CD4-positive, alpha-beta memory T cell (primary cell): ENCODE measurements at regions of chr6 and their contacts with region 1.

Region 1: DNA sequence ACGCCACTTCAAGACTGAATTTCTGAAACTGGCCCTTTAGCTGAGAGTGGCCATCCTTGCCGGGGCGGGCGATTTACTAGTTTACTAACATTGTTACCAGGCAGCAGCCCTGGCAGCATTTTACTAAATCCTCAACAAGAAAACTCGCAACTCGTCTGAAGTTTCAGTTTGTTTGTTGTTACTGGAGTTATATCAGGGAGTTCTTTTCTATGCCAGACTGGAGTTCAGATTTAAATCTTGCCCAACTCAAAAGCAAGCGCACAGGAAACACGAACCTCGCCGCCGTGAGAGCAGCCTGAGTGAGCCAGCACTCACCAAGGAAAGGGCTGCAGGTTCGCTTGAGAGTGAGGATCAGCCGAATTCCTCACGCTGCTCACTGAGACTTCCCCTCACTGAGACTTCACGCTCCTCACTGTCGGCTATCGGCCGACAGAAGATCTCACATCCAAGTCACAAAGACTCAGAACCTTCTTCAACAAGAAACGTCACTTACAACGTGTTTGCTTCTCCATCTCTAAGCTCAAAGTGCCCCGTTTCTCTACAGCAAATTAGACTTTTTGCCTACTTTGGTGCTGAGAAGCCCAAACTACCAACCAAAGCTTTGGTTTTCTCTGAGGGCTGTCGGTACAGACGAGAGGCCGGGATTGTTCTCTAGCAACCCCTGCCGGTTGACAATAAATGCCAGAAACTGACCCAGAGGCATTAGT is 78.9 kb downstream of the OLIG3 start:
- DNase-seq: peak; percentile 62 to 76 (median 73)
- H3K4me3 ChIP-seq: peak overlapping the region; percentile 48 to 53
- H3K4me3 Mint-ChIP-seq: peak overlapping the region; percentile 83 to 93 (median 88)
- H3K27ac ChIP-seq: peak overlapping the region; percentile 60
- H3K27ac Mint-ChIP-seq: peak overlapping the region; percentile 79 to 97 (median 92)
- H3K4me1 ChIP-seq: peaks cover 10% of the 10 kb centered on the region
- H3K4me1 Mint-ChIP-seq: peaks cover 6 to 20% (median 14%) of the 10 kb centered on the region in 4 donors
- H3K27me3 ChIP-seq: no peaks in the 10 kb centered on the region
- H3K27me3 Mint-ChIP-seq: no peaks in the 10 kb centered on the region

Region 2: GRCh38 chr6:136866872-136867416 is 548.3 kb before region 1 on chr6:
- CTCF ChIA-PET with region 1: no interaction called
- POLR2A ChIA-PET with region 1: no interaction called
- intact Hi-C with region 1: no loop called
- DNase-seq: no peak
- H3K4me3 ChIP-seq: no peak overlapping the region
- H3K4me3 Mint-ChIP-seq: no peak overlapping the region
- H3K27ac ChIP-seq: no peak overlapping the region
- H3K27ac Mint-ChIP-seq: peak overlapping the region in 2 of 7 donors; percentile 48 to 57
- H3K4me1 ChIP-seq: no peaks in the 10 kb centered on the region
- H3K4me1 Mint-ChIP-seq: peaks cover 0 to 2% (median 0%) of the 10 kb centered on the region in 4 donors
- H3K27me3 ChIP-seq: no peaks in the 10 kb centered on the region
- H3K27me3 Mint-ChIP-seq: no peaks in the 10 kb centered on the region

Region 3: DNA sequence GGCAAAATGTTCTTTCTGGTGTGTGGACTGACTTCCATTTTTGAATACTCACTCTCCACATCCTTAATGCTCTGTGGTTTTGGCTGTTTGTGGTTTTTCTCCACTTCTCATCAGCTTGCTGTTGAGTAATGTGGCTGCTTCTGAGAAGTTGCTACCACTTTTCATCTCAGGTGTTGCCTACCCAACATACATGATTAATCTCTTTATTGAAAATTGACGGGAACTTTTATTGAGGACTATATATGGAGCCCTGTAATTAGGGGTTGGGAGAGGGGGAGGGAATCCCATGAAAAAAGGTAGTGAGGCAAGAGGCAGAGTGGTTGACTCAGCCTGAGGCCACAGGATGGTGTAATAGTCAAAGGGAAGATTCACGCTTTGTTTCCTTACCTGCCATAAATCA is 259.4 kb before region 1 on chr6:
- CTCF ChIA-PET with region 1: interaction called, 3 read pairs
- POLR2A ChIA-PET with region 1: no interaction called
- intact Hi-C with region 1: loop called (anchors 1 kb)
- DNase-seq: peak; percentile 59 to 77 (median 70)
- H3K4me3 ChIP-seq: peak overlapping the region in 1 of 2 donors; percentile 15
- H3K4me3 Mint-ChIP-seq: peak overlapping the region in 7 of 8 donors; percentile 6 to 85 (median 60)
- H3K27ac ChIP-seq: no peak overlapping the region
- H3K27ac Mint-ChIP-seq: peak overlapping the region in 6 of 7 donors; percentile 0 to 82 (median 53)
- H3K4me1 ChIP-seq: peaks cover 19% of the 10 kb centered on the region
- H3K4me1 Mint-ChIP-seq: peaks cover 11 to 38% (median 18%) of the 10 kb centered on the region in 4 donors
- H3K27me3 ChIP-seq: no peaks in the 10 kb centered on the region
- H3K27me3 Mint-ChIP-seq: peaks cover 0 to 3% of the 10 kb centered on the region in 2 donors

Region 4: DNA sequence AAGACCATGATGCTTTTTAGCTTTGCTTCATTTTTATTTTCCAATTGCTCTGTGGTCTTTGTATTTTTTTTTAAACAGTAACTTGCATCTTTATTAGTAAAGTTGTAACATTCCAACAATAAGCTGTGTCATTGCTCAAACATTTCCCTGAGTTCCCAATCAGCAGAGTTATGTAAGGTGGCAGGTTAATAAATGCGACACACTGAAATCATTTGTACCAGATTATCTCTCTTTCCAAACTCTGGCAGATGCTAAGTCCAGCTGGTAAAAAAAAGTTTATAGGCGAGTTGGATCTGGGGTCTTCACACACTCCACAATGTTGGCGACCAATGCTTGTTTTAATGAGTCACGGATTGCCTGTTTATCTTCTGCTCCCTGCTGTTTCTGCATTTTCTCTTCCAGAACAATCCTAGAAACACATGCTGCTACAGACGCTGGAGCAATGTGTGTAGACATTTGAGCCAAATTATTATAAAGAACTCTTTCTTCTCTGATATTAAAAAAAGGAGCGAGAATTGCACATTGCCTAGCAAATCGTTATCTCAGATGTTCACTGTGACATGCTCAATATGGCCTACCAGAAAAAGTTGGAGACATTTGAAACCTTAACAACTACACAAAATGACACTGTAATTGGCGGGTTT is 82.5 kb before region 1 on chr6:
- CTCF ChIA-PET with region 1: interaction called, 10 read pairs
- POLR2A ChIA-PET with region 1: no interaction called
- intact Hi-C with region 1: no loop called
- DNase-seq: no peak
- H3K4me3 ChIP-seq: no peak overlapping the region
- H3K4me3 Mint-ChIP-seq: no peak overlapping the region
- H3K27ac ChIP-seq: no peak overlapping the region
- H3K27ac Mint-ChIP-seq: no peak overlapping the region
- H3K4me1 ChIP-seq: no peaks in the 10 kb centered on the region
- H3K4me1 Mint-ChIP-seq: no peaks in the 10 kb centered on the region
- H3K27me3 ChIP-seq: no peaks in the 10 kb centered on the region
- H3K27me3 Mint-ChIP-seq: peaks cover 7 to 14% of the 10 kb centered on the region in 2 donors

Region 5: GRCh38 chr6:137389150-137389704 is 26.1 kb before region 1 on chr6:
- CTCF ChIA-PET with region 1: interaction called, 27 read pairs
- POLR2A ChIA-PET with region 1: interaction called, 63 read pairs
- intact Hi-C with region 1: loop called (anchors 1 kb)
- DNase-seq: peak; percentile 63 to 88 (median 71)
- H3K4me3 ChIP-seq: peak overlapping the region in 1 of 2 donors; percentile 8
- H3K4me3 Mint-ChIP-seq: peak overlapping the region; percentile 63 to 85 (median 80)
- H3K27ac ChIP-seq: peak overlapping the region; percentile 53
- H3K27ac Mint-ChIP-seq: peak overlapping the region; percentile 63 to 98 (median 93)
- H3K4me1 ChIP-seq: peaks cover 66% of the 10 kb centered on the region
- H3K4me1 Mint-ChIP-seq: peaks cover 61 to 87% (median 73%) of the 10 kb centered on the region in 4 donors
- H3K27me3 ChIP-seq: no peaks in the 10 kb centered on the region
- H3K27me3 Mint-ChIP-seq: no peaks in the 10 kb centered on the region